ENCODE measurements at regions of chr9 and their contacts with region 1.

Region 1: GRCh38 chr9:33290247-33291030 is at the start of gene NFX1:
- DNase-seq: peak; percentile 99
- H3K4me3 ChIP-seq: peak within 1 kb of the TSS; percentile 75 to 83 (median 82)
- H3K27ac ChIP-seq: peak within 1 kb of the TSS; percentile 100
- H3K4me1 ChIP-seq: peaks cover 23% of the 10 kb centered on the region
- H3K27me3 ChIP-seq: no peaks in the 10 kb centered on the region
- CTCF ChIP-seq: no peak
- total RNA-seq, gene NFX1: 29.8 to 47.2 TPM

Region 2: GRCh38 chr9:33320568-33321261 is 30.3 kb after region 1 on chr9:
- CTCF ChIA-PET with region 1: interaction called, 8 read pairs
- dilution Hi-C with region 1: no loop called
- in situ Hi-C with region 1: no loop called
- intact Hi-C with region 1: loop called (anchors 1 kb)
- DNase-seq: peak; percentile 89
- H3K4me3 ChIP-seq: no peak overlapping the region
- H3K27ac ChIP-seq: peak overlapping the region; percentile 72
- H3K4me1 ChIP-seq: peaks cover 19% of the 10 kb centered on the region
- H3K27me3 ChIP-seq: no peaks in the 10 kb centered on the region
- CTCF ChIP-seq: no peak

Region 3: DNA sequence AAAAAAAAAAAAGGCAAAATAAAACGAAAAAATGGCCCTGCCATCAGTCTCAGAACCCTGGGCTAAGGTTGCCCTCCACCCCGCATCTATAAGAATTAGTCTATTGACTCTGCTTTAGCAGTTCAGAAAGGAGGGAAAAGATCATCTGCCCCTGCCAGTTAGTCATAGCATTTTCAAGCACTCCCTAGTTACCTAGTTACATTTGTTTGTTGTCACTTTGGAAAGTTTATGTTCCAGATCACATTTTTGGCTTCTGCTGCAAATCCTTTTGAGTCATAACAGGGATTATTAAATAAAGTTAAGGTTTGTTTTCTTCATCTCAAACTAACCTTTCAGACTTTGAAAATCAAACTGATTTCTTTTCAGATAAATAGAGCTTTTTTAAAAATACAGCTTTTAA is 59.9 kb after region 1 on chr9:
- CTCF ChIA-PET with region 1: no interaction called
- dilution Hi-C with region 1: no loop called
- in situ Hi-C with region 1: no loop called
- intact Hi-C with region 1: no loop called
- DNase-seq: peak; percentile 65
- H3K4me3 ChIP-seq: no peak overlapping the region
- H3K27ac ChIP-seq: peak overlapping the region; percentile 16
- H3K4me1 ChIP-seq: peaks cover 11% of the 10 kb centered on the region
- H3K27me3 ChIP-seq: no peaks in the 10 kb centered on the region
- CTCF ChIP-seq: no peak

Region 4: GRCh38 chr9:33466565-33467495 is 176.4 kb after region 1 on chr9:
- CTCF ChIA-PET with region 1: no interaction called
- dilution Hi-C with region 1: no loop called
- in situ Hi-C with region 1: loop called in 1 of 2 experiments (anchors 25 kb)
- intact Hi-C with region 1: loop called (anchors 1 kb)
- DNase-seq: no peak
- H3K4me3 ChIP-seq: no peak overlapping the region
- H3K27ac ChIP-seq: no peak overlapping the region
- H3K4me1 ChIP-seq: peaks cover 17% of the 10 kb centered on the region
- H3K27me3 ChIP-seq: no peaks in the 10 kb centered on the region
- CTCF ChIP-seq: peak; percentile 98

Region 5: GRCh38 chr9:33623658-33624586 is 333.5 kb after region 1 on chr9:
- CTCF ChIA-PET with region 1: no interaction called
- dilution Hi-C with region 1: no loop called
- in situ Hi-C with region 1: no loop called
- intact Hi-C with region 1: loop called (anchors 1 kb)
- DNase-seq: peak; percentile 74
- H3K4me3 ChIP-seq: no peak overlapping the region
- H3K27ac ChIP-seq: no peak overlapping the region
- H3K4me1 ChIP-seq: peaks cover 29% of the 10 kb centered on the region
- H3K27me3 ChIP-seq: no peaks in the 10 kb centered on the region
- CTCF ChIP-seq: peak; percentile 77 to 84

Measured in mammary epithelial cell (primary cell).